ENCODE measurements at regions of chr13 and their contacts with region 1.

Region 1: DNA sequence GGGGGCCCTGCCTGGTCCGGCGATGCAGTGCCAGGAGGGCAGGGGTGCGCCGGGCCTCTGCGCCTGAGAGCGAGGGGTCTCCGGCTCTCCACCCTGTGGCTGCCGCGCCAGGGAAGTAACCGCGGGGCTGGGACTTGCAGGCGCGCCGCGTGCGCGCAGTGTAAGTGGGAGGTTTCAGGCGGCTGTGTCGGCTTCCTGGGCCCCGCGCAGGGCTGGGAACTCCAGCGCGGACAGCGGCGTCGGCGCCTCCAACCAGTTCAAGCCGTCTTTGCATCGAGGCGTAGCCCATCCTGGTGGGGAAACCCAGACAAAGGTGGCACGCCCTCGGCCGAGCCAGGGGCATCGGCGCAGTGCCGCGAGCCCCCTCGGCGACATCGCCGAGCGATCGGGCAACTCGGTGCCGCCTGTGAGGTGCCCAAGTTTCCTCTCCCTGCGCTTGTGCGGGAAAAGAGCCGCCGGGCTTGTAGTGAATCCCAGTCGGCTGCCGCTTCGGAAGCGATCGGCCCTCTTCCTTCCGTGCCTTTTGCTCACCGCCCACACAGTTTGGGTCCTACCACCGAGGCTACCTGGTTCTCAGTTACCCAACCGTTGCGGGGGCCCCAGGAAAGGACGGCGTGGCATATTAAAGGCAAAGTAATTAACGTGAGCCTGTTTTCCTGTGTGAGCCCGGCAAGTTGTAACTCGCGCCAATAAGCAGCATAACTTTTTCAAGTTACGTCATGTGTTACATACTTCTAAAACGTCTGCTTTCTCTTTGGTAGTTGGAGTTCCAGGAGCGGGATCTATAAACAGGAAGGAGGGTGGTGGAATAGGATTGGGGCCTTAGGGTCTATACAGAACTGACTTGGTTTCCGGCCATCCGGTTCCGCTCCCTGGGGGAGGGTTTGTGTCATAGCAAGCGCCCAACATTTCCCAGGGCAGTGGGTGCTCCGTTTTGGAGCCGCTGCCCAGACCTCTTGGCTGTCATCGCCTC is 1.2 kb downstream of the LRCH1 start:
- DNase-seq: peak; percentile 38 to 86 (median 61)
- ATAC-seq: peak; percentile 54 to 71 (median 59)
- H3K4me3 ChIP-seq: peak overlapping the region; percentile 82 to 94
- H3K4me3 Mint-ChIP-seq: peak overlapping the region; percentile 93 to 95 (median 94)
- H3K27ac ChIP-seq: peak overlapping the region; percentile 93
- H3K27ac Mint-ChIP-seq: peak overlapping the region; percentile 85 to 89
- H3K4me1 ChIP-seq: peaks cover 14 to 26% of the 10 kb centered on the region in 2 experiments
- H3K4me1 Mint-ChIP-seq: peaks cover 52 to 58% (median 56%) of the 10 kb centered on the region in 3 donors
- H3K27me3 ChIP-seq: peaks cover 0 to 6% of the 10 kb centered on the region in 2 experiments
- H3K27me3 Mint-ChIP-seq: peaks cover 0 to 2% of the 10 kb centered on the region in 2 donors

Region 2: DNA sequence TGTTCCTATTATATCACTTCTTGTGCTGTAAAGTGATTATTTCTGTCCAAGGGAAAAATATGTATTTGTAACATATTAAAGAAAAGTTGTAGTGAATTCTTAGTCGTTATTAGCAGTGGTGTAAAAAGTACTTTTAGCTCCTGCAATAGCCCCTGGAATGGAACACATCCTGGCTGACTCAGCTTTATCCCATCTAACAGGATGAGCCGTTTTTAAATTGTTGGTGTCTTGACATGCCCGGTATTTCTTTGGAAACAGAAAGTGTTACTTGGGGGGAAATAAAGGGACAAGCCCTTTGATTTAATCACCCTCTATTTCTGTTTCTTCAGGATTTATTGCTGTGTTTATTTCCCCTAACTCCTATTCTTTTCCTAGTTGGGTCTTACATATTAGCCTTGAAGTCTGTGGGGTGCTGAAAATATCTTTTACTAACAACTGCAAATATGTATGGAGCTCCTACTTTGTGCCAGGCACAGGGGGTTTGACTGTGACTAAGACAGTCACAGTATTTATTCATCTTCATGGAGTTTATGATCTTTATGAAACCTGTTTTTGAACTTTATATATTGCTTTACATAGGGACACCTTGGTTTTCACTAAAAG is 1071.5 kb before region 1 on chr13:
- CTCF ChIA-PET with region 1: no interaction called
- POLR2A ChIA-PET with region 1: no interaction called
- DNase-seq: no peak
- ATAC-seq: no peak
- H3K4me3 ChIP-seq: no peak overlapping the region
- H3K4me3 Mint-ChIP-seq: no peak overlapping the region
- H3K27ac ChIP-seq: no peak overlapping the region
- H3K27ac Mint-ChIP-seq: peak overlapping the region; percentile 47 to 56
- H3K4me1 ChIP-seq: no peaks in the 10 kb centered on the region
- H3K4me1 Mint-ChIP-seq: peaks cover 8 to 14% (median 9%) of the 10 kb centered on the region in 3 donors
- H3K27me3 ChIP-seq: no peaks in the 10 kb centered on the region
- H3K27me3 Mint-ChIP-seq: no peaks in the 10 kb centered on the region

Region 3: DNA sequence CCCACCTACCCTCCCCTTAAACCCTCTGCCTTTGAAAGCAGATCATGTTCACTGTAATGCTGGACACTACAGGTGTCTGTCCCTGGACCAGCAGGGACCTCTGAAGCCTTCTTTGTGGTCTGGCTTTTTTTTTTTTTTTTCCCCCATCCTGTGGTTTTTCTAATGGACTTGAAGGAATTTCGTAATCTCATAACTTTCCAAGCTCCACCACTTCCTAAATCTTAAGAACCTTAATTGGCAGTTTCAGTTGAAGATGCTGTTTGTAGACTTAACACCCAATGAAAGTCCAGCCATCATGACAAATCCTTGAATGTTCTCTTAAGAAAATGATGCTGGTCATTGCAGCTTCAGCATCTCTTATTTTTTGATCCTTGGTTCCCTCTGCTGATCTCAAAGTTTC is 46.2 kb before region 1 on chr13:
- CTCF ChIA-PET with region 1: no interaction called
- POLR2A ChIA-PET with region 1: no interaction called
- DNase-seq: no peak
- ATAC-seq: no peak
- H3K4me3 ChIP-seq: no peak overlapping the region
- H3K4me3 Mint-ChIP-seq: no peak overlapping the region
- H3K27ac ChIP-seq: no peak overlapping the region
- H3K27ac Mint-ChIP-seq: no peak overlapping the region
- H3K4me1 ChIP-seq: no peaks in the 10 kb centered on the region
- H3K4me1 Mint-ChIP-seq: no peaks in the 10 kb centered on the region
- H3K27me3 ChIP-seq: no peaks in the 10 kb centered on the region
- H3K27me3 Mint-ChIP-seq: peaks cover 0 to 10% of the 10 kb centered on the region in 2 donors

Region 4: DNA sequence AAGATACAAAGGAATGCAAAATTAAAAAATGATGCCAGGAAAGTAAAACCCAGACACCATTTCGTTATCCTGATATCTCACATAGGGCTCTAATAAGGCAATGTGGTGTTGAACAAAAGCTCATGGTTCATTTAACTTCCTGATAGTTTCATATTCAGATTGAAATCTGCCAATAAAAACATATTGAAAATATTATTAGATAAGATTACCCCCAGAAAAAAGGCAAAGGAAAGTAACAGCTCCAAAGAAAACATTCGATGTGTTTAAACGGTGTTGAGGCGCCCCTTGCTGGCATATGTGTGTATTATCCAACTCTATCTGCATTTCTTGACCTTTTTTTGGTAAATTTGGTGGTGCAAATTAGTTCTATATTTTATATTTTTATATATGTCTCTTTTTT is 166.9 kb after region 1 on chr13:
- CTCF ChIA-PET with region 1: interaction called, 10 to 43 read pairs
- POLR2A ChIA-PET with region 1: no interaction called
- DNase-seq: peak in 31 of 35 experiments; percentile 5 to 68 (median 33)
- ATAC-seq: peak in 1 of 4 experiments; percentile 49
- H3K4me3 ChIP-seq: no peak overlapping the region
- H3K4me3 Mint-ChIP-seq: no peak overlapping the region
- H3K27ac ChIP-seq: no peak overlapping the region
- H3K27ac Mint-ChIP-seq: no peak overlapping the region
- H3K4me1 ChIP-seq: no peaks in the 10 kb centered on the region
- H3K4me1 Mint-ChIP-seq: peaks cover 0 to 1% (median 0%) of the 10 kb centered on the region in 3 donors
- H3K27me3 ChIP-seq: no peaks in the 10 kb centered on the region
- H3K27me3 Mint-ChIP-seq: no peaks in the 10 kb centered on the region

Measured in T-cell (primary cell).